ENCODE measurements at regions of chr7 and their contacts with region 1.

Region 1: GRCh38 chr7:33109005-33109757 is at the start of gene RP9:
- DNase-seq: peak; percentile 84 to 92 (median 89)
- H3K4me3 ChIP-seq: peak within 1 kb of the TSS; percentile 83 to 98 (median 91)
- H3K27ac ChIP-seq: peak within 1 kb of the TSS; percentile 75 to 82
- H3K4me1 ChIP-seq: peaks cover 15 to 31% (median 21%) of the 10 kb centered on the region in 4 experiments
- H3K27me3 ChIP-seq: no peaks in the 10 kb centered on the region

Region 2: DNA sequence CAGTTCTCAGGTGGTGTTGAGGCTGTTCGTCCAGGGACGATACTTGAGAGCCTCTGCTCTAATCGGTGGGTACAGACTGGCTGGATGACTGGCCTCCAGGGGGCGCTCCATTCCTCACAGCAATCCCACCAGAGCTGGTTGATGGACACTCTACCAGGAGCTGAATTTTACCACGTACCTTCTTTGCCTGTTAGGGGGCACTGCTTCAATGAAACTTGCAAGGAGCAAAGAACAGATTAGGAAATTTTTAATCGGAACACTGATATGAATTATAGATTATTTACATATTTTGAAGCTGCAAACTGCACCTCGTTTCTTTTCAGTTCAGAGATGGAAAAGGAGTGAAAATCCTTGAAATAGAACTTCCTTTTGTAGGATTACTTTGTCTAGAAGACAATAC is 262.5 kb before region 1 on chr7:
- CTCF ChIA-PET with region 1: interaction called, 51 read pairs
- POLR2A ChIA-PET with region 1: no interaction called
- DNase-seq: peak; percentile 91 to 94 (median 92)
- H3K4me3 ChIP-seq: peak overlapping the region in 1 of 7 experiments; percentile 37
- H3K27ac ChIP-seq: no peak overlapping the region
- H3K4me1 ChIP-seq: peaks cover 0 to 2% (median 0%) of the 10 kb centered on the region in 4 experiments
- H3K27me3 ChIP-seq: no peaks in the 10 kb centered on the region

Region 3: DNA sequence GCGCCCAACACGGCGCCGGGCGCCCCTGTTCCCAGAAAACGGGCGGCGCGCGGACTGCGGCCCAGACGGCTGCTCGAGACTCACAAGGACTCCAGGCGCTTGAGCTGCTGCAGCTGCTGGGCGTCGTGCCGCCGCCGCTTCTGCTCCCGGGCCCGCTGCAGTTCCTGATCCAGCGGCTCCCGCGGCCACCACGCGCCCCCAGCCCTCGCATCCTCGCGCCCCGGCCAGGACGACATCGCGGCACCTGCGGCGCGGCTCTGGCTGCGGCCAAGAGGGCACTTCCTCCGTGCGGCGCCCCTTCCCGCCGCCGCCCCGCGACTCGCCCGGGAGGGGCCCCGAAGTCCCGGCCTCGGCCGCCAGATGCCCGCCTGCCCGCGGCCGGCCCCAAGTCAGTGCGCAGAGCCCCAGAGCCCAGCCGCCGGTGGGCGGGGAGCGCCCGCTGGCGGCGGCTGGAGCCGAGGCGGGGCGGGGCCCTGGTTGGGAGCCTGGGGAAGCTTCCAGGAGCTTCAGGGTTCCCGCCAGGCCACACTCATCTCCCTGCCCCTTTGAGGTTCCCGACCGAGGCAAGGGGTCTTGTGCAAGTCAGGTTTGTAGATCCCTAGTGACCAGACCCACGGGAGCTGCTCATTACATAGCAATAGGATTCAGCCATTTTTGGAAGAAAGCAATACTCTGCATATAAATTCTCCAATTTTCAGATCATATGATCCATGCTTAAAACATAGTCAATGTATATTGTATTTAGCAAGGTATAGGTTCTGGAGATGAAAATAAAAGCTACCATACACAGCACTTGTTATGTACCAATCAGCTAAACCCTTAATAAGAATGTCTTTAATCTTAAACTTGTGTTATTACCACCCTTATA is 166.2 kb before region 1 on chr7:
- CTCF ChIA-PET with region 1: interaction called, 11 read pairs
- POLR2A ChIA-PET with region 1: interaction called, 5 read pairs
- DNase-seq: peak; percentile 67 to 89 (median 78)
- H3K4me3 ChIP-seq: peak overlapping the region; percentile 57 to 93 (median 74)
- H3K27ac ChIP-seq: peak overlapping the region in 1 of 2 experiments; percentile 70
- H3K4me1 ChIP-seq: peaks cover 5 to 27% (median 19%) of the 10 kb centered on the region in 4 experiments
- H3K27me3 ChIP-seq: no peaks in the 10 kb centered on the region

Region 4: DNA sequence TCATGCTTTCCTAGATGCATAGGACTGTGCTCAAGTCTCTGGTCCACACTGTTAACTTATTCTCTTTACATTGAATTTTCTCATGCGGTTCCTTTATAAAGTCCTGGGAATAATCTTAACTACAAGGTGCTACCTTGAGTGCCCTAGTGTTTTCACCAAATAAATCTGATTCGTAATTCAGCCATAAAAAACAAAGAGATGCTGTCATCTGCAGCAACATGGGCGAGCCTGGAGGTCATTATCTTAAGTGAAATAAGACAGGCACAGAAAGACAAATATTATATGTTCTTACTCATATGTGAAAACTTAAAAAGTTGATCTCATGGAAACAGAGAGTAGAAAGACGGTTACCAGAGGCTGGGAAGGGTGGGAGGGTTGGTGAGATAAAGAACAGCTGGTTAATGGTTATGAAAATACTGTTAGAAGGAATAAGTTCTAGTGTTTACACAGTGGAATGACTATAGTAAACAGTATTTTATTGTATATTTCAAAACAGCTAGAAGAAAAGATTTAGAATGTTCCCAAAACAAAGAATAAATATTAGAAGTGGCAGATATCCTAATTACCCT is 84.9 kb before region 1 on chr7:
- CTCF ChIA-PET with region 1: interaction called, 22 read pairs
- POLR2A ChIA-PET with region 1: no interaction called
- DNase-seq: no peak
- H3K4me3 ChIP-seq: no peak overlapping the region
- H3K27ac ChIP-seq: no peak overlapping the region
- H3K4me1 ChIP-seq: no peaks in the 10 kb centered on the region
- H3K27me3 ChIP-seq: no peaks in the 10 kb centered on the region

Region 5: GRCh38 chr7:33050535-33051318 is 58.5 kb before region 1 on chr7:
- CTCF ChIA-PET with region 1: interaction called, 10 read pairs
- POLR2A ChIA-PET with region 1: no interaction called
- DNase-seq: peak; percentile 71 to 82 (median 75)
- H3K4me3 ChIP-seq: peak overlapping the region in 6 of 7 experiments; percentile 19 to 71 (median 55)
- H3K27ac ChIP-seq: peak overlapping the region; percentile 29 to 91
- H3K4me1 ChIP-seq: peaks cover 39 to 74% (median 55%) of the 10 kb centered on the region in 4 experiments
- H3K27me3 ChIP-seq: no peaks in the 10 kb centered on the region

Region 6: GRCh38 chr7:33128990-33129805 is 20.0 kb after region 1 on chr7 and contains the start of gene BBS9:
- CTCF ChIA-PET with region 1: interaction called, 12 read pairs
- POLR2A ChIA-PET with region 1: interaction called, 4 read pairs
- DNase-seq: peak; percentile 96 to 99 (median 97)
- H3K4me3 ChIP-seq: peak within 1 kb of the TSS; percentile 72 to 100 (median 90)
- H3K27ac ChIP-seq: peak within 1 kb of the TSS; percentile 74 to 75
- H3K4me1 ChIP-seq: peaks cover 5 to 17% (median 13%) of the 10 kb centered on the region in 4 experiments
- H3K27me3 ChIP-seq: no peaks in the 10 kb centered on the region

Region 7: DNA sequence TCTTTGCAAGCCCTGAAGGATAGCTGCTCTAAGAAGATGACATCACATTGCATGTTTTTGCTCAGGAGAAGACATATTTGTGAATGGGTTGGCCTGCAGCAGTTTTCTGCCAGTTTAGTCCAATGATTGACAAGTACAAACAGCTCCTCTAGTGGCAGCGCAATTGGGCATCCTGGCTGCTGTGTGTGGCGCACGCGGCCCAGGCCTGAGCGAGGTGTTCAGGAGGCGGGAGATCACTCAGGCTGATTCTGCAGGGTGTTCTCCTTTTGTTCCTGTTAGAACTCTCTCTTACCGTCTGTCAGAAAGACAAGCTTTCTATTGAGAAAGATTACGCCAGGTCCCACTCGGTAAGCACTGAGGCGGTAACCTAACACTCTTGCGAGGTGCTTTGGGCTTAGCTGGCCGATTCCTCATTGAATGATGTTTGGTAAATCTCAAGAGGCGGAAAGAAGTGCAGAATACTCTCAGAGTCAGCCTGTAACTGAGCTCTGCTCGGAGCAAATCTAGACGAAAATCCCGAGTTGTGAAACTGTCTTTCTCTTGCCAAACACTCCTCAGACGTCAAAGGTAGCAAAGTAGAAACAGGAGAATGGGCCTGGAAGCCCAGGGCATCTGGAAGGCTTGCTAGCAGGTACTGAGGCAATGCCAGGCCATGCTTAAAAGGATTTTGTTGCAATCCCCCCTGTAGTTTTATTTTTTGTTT is 577.0 kb after region 1 on chr7:
- CTCF ChIA-PET with region 1: no interaction called
- POLR2A ChIA-PET with region 1: no interaction called
- DNase-seq: no peak
- H3K4me3 ChIP-seq: no peak overlapping the region
- H3K27ac ChIP-seq: no peak overlapping the region
- H3K4me1 ChIP-seq: no peaks in the 10 kb centered on the region
- H3K27me3 ChIP-seq: no peaks in the 10 kb centered on the region